IMR-90 (cell line): ENCODE measurements at regions of chr3 and their contacts with region 1.

Region 1: DNA sequence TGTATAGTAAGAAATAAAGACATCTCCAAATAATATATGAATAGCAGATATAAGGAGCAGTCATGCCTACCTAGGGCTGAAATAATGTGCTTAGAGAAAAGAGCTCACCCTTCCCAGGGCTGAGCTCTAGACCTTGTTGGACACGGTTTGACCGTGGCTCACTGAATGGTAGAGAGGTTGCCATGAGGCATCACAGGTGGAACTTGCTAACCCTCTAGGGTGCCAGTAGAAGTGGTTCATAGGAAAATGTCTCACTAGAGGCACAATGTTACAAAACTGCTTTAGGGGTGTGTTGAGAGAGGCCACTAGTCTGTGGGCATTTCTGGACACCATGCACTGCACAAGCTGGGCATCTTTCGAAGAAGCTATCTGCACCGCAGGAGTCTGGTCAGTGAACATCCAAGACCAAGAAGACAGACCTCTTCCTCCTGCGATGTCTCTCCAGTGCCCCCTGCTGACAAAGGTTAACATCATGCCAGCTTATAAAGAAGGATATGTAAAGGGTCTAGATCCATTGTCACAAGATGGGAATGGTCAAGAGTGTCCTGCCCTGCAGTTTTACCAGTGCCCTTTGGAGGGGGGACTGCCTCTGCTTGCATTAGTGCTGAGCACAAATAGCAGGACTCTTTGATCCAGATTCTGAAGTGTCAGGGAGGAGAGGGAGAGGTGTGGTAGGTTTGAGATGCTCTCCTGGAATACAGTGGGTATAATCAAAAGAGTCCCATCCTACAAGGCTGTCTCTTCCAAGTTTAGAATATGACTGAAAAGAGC is 266.8 kb downstream of the ZNF385D start:
- DNase-seq: peak; percentile 62
- ATAC-seq: peak; percentile 92
- H3K4me3 ChIP-seq: no peak overlapping the region
- H3K27ac ChIP-seq: no peak overlapping the region
- H3K4me1 ChIP-seq: no peaks in the 10 kb centered on the region
- H3K27me3 ChIP-seq: no peaks in the 10 kb centered on the region
- CTCF ChIP-seq: peak; percentile 56
- POLR2A ChIP-seq: no peak
- RAD21 ChIP-seq: peak; percentile 71

Region 2: DNA sequence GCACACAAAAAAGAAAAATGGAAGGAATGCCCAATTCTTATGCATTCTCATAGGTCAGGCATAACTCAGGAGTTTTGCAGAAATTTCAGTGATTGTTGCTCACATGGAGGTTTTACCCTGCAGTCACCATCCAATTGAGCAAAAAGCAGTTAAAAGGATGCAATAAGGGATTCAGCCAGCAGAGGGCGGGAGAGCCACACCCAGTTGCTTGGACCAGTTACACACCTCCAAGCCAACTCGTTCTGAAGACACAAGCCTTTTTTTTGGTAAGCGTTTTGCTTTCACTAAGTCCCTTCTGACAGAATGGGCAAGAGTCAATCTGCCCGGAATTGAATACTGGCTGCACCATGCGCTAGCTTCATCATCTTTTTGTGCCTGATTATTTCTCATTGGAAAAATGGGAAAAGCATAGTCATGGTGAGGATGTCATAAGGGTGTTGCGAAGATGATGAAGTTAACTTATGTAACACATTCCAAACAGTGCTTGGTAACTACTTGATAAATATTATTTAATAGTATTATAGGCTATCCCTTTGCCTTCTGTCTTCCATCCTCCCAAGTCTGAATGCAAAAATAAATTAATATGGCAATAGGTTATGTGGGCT is 1143.8 kb before region 1 on chr3:
- CTCF ChIA-PET with region 1: no interaction called
- POLR2A ChIA-PET with region 1: no interaction called
- dilution Hi-C with region 1: no loop called
- in situ Hi-C with region 1: loop called (anchors 25 kb)
- intact Hi-C with region 1: loop called (anchors 1 kb)
- DNase-seq: peak; percentile 50
- ATAC-seq: peak; percentile 87
- H3K4me3 ChIP-seq: no peak overlapping the region
- H3K27ac ChIP-seq: no peak overlapping the region
- H3K4me1 ChIP-seq: no peaks in the 10 kb centered on the region
- H3K27me3 ChIP-seq: no peaks in the 10 kb centered on the region
- CTCF ChIP-seq: peak; percentile 85
- POLR2A ChIP-seq: no peak
- RAD21 ChIP-seq: peak; percentile 81

Region 3: DNA sequence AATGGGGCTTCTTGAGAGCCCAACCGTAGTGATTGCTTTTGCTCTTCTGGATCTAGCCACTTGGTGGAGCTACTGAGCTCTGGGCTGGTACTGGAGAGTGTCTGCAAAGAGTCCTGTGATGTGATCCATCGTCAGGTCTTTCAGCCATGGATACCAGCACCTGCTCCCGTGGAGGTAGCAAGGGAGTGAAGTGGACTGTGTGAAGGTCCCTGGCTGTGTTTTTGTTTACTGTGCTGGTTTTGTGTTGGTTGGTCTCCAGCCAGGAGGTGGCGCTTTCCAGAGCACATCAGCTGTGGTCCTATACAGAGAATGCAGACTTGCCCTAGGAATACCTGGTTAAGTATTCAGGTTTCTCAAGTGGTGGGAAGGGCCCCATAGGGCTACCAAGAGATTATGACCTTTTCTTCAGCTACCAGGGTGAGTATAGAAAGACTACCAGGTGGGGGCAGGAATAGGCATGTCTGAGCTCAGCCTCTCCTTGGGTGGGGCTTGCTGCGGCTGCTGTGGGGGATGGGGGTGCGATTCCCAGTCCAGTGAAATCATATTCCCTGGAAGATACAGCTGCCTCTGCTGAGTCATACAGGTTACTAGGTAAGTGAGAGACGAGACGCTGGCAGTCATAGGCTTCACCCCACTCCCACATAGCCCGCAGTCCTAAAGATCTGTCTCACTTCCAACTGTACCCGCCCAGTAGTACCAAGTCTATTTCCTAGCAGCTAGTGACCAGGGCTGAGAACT is 467.0 kb before region 1 on chr3:
- CTCF ChIA-PET with region 1: no interaction called
- POLR2A ChIA-PET with region 1: no interaction called
- dilution Hi-C with region 1: no loop called
- in situ Hi-C with region 1: no loop called
- intact Hi-C with region 1: loop called (anchors 5 kb)
- DNase-seq: no peak
- ATAC-seq: no peak
- H3K4me3 ChIP-seq: no peak overlapping the region
- H3K27ac ChIP-seq: no peak overlapping the region
- H3K4me1 ChIP-seq: no peaks in the 10 kb centered on the region
- H3K27me3 ChIP-seq: no peaks in the 10 kb centered on the region
- CTCF ChIP-seq: no peak
- POLR2A ChIP-seq: no peak
- RAD21 ChIP-seq: no peak

Region 4: DNA sequence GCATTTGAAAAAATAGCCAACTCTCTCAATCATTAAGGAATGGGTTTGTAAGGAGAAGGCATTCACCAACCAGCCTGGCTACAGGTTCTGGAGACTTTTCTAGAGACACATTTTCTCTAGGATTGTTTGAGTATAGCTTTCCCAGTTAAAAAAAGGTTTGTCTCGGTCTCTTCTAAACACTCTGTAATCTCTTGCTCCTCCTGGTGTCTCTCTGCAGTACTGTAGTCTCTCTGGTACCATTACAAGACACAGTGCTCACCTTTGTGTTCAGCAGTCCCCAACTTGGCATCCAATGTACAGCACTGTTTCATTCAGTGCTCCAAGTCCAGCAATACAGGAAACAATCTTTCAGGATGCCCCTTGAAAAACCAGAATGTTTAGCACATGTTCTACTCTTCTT is 267.6 kb before region 1 on chr3:
- CTCF ChIA-PET with region 1: no interaction called
- POLR2A ChIA-PET with region 1: no interaction called
- dilution Hi-C with region 1: no loop called
- in situ Hi-C with region 1: no loop called
- intact Hi-C with region 1: no loop called
- DNase-seq: no peak
- ATAC-seq: no peak
- H3K4me3 ChIP-seq: no peak overlapping the region
- H3K27ac ChIP-seq: no peak overlapping the region
- H3K4me1 ChIP-seq: no peaks in the 10 kb centered on the region
- H3K27me3 ChIP-seq: no peaks in the 10 kb centered on the region
- CTCF ChIP-seq: 0 out of 2 replicates have a peak, but pooled peaks have one; percentile 5
- POLR2A ChIP-seq: no peak
- RAD21 ChIP-seq: no peak

Region 5: DNA sequence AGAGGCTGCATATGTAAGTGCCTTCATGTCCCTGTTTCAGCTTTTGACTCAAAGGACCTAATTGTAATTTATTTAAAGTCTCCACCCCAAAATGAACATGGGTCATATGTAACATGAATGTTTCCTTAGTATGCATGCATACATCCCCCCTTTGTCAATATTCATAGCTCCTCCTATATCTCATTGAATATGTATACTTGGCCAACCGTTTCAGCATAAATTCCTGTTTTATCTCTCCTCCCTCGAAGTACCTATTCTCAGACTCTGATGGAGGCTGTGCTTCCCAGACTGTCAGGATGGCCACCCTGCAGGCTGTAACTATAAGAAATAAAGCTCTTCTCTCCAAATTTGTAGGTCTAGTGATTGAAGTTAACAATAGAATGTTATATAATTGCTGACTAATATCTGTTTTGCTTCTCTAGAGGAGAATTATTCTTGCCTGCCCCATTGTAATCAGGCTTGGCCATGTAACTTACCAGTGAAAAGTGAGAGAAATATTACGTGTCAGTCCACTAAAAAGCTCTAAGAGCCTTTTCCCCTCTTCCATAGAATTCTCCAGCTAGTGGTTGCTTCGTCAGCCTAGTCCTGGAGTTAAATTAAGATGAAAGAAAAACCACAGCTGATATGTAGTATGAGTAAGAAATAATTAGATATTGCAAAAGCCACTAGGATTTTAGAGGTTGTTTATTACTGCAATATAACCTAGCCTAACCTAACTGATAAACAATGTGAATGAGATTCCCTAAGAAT is 21.6 kb after region 1 on chr3:
- CTCF ChIA-PET with region 1: no interaction called
- POLR2A ChIA-PET with region 1: no interaction called
- dilution Hi-C with region 1: no loop called
- in situ Hi-C with region 1: no loop called
- intact Hi-C with region 1: no loop called
- DNase-seq: no peak
- ATAC-seq: no peak
- H3K4me3 ChIP-seq: no peak overlapping the region
- H3K27ac ChIP-seq: no peak overlapping the region
- H3K4me1 ChIP-seq: no peaks in the 10 kb centered on the region
- H3K27me3 ChIP-seq: no peaks in the 10 kb centered on the region
- CTCF ChIP-seq: no peak
- POLR2A ChIP-seq: no peak
- RAD21 ChIP-seq: no peak

Region 6: GRCh38 chr3:21517184-21517583 is 32.9 kb after region 1 on chr3:
- CTCF ChIA-PET with region 1: no interaction called
- POLR2A ChIA-PET with region 1: no interaction called
- dilution Hi-C with region 1: no loop called
- in situ Hi-C with region 1: no loop called
- intact Hi-C with region 1: no loop called
- DNase-seq: no peak
- ATAC-seq: no peak
- H3K4me3 ChIP-seq: no peak overlapping the region
- H3K27ac ChIP-seq: no peak overlapping the region
- H3K4me1 ChIP-seq: no peaks in the 10 kb centered on the region
- H3K27me3 ChIP-seq: no peaks in the 10 kb centered on the region
- CTCF ChIP-seq: no peak
- POLR2A ChIP-seq: no peak
- RAD21 ChIP-seq: no peak